ENCODE measurements at regions of chr5 and their contacts with region 1.

Region 1: GRCh38 chr5:145548097-145548496 is 287.0 kb downstream of the PRELID2 start:
- DNase-seq: no peak
- ATAC-seq: no peak
- H3K4me3 ChIP-seq: no peak overlapping the region
- H3K27ac ChIP-seq: no peak overlapping the region
- H3K4me1 ChIP-seq: no peaks in the 10 kb centered on the region
- H3K27me3 ChIP-seq: no peaks in the 10 kb centered on the region
- CTCF ChIP-seq: no peak

Region 2: GRCh38 chr5:145867806-145868205 is 319.7 kb after region 1 on chr5:
- intact Hi-C with region 1: loop called in 1 of 10 experiments (anchors 5 kb)
- DNase-seq: no peak
- ATAC-seq: no peak
- H3K4me3 ChIP-seq: no peak overlapping the region
- H3K27ac ChIP-seq: no peak overlapping the region
- H3K4me1 ChIP-seq: no peaks in the 10 kb centered on the region
- H3K27me3 ChIP-seq: no peaks in the 10 kb centered on the region
- CTCF ChIP-seq: no peak

Region 3: DNA sequence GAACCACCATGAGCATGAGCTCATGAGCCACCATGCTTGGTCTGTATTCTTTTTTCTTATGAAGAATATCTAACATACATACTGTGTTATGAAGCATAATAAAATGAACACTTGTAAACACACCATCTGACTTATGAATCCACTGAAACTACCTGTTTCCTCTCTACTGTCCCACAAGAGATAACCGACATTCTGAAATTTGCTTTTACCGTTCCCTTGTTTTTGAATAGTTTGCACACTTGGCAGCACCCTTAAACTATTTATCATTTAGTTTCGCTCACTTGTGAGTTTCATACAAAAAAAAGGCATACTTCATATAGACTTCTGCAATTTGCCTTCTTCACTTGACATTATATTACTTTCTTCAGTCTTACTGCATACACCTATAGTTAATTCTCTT is 625.5 kb after region 1 on chr5:
- intact Hi-C with region 1: no loop called
- DNase-seq: no peak
- ATAC-seq: no peak
- H3K4me3 ChIP-seq: no peak overlapping the region
- H3K27ac ChIP-seq: no peak overlapping the region
- H3K4me1 ChIP-seq: no peaks in the 10 kb centered on the region
- H3K27me3 ChIP-seq: no peaks in the 10 kb centered on the region
- CTCF ChIP-seq: no peak